ENCODE measurements at regions of chr5 and their contacts with region 1.

Region 1: GRCh38 chr5:126776497-126777256 is at the start of gene LMNB1:
- DNase-seq: peak; percentile 81 to 98
- ATAC-seq: peak; percentile 76 to 91
- H3K4me3 ChIP-seq: peak within 1 kb of the TSS; percentile 93
- H3K27ac ChIP-seq: peak within 1 kb of the TSS; percentile 94 to 97
- H3K4me1 ChIP-seq: peaks cover 21% of the 10 kb centered on the region
- CTCF ChIP-seq: no peak
- EP300 ChIP-seq: no peak
- POLR2A ChIP-seq: peak; percentile 58
- RAD21 ChIP-seq: no peak
- polyA plus RNA-seq, gene LMNB1: 37.0 and 45.9 TPM in 2 replicates

Region 2: GRCh38 chr5:126656396-126657007 is 120.2 kb before region 1 on chr5:
- CTCF ChIA-PET with region 1: interaction called, 41 read pairs
- POLR2A ChIA-PET with region 1: no interaction called
- DNase-seq: peak; percentile 55 to 59
- ATAC-seq: peak in 1 of 2 experiments; percentile 64; a peak in 3 of 6 replicates
- H3K4me3 ChIP-seq: no peak overlapping the region
- H3K27ac ChIP-seq: no peak overlapping the region
- H3K4me1 ChIP-seq: peaks cover 9% of the 10 kb centered on the region; the same call in 2 of the 3 replicates
- CTCF ChIP-seq: peak; percentile 98
- EP300 ChIP-seq: no peak
- POLR2A ChIP-seq: no peak
- RAD21 ChIP-seq: peak; percentile 92

Region 3: GRCh38 chr5:126686451-126687126 is 90.1 kb before region 1 on chr5:
- CTCF ChIA-PET with region 1: interaction called, 206 read pairs
- POLR2A ChIA-PET with region 1: no interaction called
- DNase-seq: no peak
- ATAC-seq: no peak
- H3K4me3 ChIP-seq: no peak overlapping the region
- H3K27ac ChIP-seq: no peak overlapping the region
- H3K4me1 ChIP-seq: no peaks in the 10 kb centered on the region
- CTCF ChIP-seq: no peak
- EP300 ChIP-seq: no peak
- POLR2A ChIP-seq: no peak
- RAD21 ChIP-seq: no peak

Region 4: DNA sequence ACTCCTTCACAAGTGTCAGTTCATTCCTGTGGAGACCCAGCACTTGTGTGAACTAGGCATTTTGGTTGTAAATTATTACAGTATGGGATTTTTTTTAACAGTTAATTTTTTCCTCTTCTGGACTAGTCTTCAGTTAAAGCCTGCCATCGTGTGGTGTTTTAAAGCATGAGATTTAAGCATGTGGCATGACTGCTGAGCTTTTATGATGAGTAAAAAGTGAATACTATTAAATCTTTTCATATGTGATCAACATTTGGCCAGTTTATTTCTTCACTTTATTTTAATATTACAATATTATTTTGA is 25.3 kb after region 1 on chr5:
- CTCF ChIA-PET with region 1: interaction called, 24 read pairs
- POLR2A ChIA-PET with region 1: no interaction called
- DNase-seq: peak in 1 of 2 experiments; percentile 41
- ATAC-seq: peak; percentile 68 to 79
- H3K4me3 ChIP-seq: no peak overlapping the region
- H3K27ac ChIP-seq: 0 out of 6 replicates have a peak overlapping the region, but pooled peaks of 1 of the 2 experiments have one; percentile 12
- H3K4me1 ChIP-seq: peaks cover 19% of the 10 kb centered on the region
- CTCF ChIP-seq: peak; percentile 68
- EP300 ChIP-seq: no peak
- POLR2A ChIP-seq: no peak
- RAD21 ChIP-seq: peak; percentile 37 to 67

Measured in A549 (cell line).